GM10248 (cell line): ENCODE measurements at regions of chr3 and their contacts with region 1.

Region 1: DNA sequence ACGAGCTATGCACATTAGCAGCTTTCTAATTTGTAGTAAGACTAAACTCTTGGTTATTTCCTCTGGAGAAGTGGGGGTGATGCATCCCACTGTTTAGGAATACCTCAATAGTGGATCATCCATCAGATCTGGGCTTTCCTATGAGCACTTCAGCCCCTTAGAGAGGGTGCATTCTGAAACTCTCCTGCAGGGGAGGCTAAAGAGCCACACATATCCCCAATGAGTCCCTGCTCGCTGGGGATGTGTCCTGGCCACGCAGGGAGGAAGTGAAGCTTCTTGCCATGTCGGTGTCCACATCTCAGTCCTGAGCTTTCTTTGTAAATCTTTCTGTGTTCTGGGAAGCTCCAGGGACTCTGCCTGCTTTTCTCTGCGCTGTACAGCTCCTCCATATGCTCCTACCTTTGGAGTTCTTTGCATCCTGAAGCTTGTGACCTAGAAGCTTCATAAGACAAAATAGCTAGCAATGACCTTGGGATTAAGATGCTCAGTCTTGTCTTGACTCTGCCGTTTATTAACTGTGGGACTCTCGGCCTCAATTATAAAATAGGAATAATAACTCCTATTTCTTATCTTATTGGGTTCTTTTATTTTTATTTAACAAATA is 28.3 kb upstream of the MASP1 start:
- DNase-seq: peak; percentile 56
- CTCF ChIP-seq: peak; percentile 80

Region 2: DNA sequence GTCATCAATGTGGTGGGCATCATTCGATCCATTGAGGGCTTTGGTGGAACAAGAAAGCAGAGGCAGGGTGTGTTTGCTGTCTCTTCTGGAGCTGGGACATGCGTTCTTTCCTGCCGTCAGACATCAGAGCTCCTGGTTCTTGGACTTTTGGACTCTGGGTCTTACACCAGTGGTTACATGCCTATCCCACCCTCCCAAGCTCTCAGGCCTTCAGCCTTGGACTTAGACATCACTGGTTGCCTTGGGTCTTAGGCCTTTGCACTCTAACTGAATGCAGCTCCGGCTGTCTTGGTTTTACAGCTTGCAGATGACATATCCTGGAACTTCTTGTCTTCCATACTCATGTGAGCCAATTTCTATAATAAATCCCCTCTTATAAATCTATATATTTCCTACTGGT is 20.2 kb before region 1 on chr3:
- CTCF ChIA-PET with region 1: interaction called, 56 read pairs
- POLR2A ChIA-PET with region 1: no interaction called
- DNase-seq: no peak
- CTCF ChIP-seq: no peak

Region 3: GRCh38 chr3:187342255-187342654 is 22.5 kb after region 1 on chr3:
- CTCF ChIA-PET with region 1: interaction called, 29 read pairs
- POLR2A ChIA-PET with region 1: no interaction called
- DNase-seq: no peak
- CTCF ChIP-seq: no peak

Region 4: GRCh38 chr3:187629711-187630110 is 309.9 kb after region 1 on chr3:
- CTCF ChIA-PET with region 1: interaction called, 12 read pairs
- POLR2A ChIA-PET with region 1: no interaction called
- DNase-seq: no peak
- CTCF ChIP-seq: no peak

Region 5: GRCh38 chr3:187679638-187680396 is 360.0 kb after region 1 on chr3:
- CTCF ChIA-PET with region 1: interaction called, 653 read pairs
- POLR2A ChIA-PET with region 1: no interaction called
- DNase-seq: peak; percentile 67
- CTCF ChIP-seq: peak; percentile 95

Region 6: GRCh38 chr3:187709155-187709554 is 389.4 kb after region 1 on chr3:
- CTCF ChIA-PET with region 1: interaction called, 127 read pairs
- POLR2A ChIA-PET with region 1: no interaction called
- DNase-seq: no peak
- CTCF ChIP-seq: no peak